Right ventricle myocardium superior (tissue), 1 donor: ENCODE measurements at regions of chr15 and their contacts with region 1.

Region 1: GRCh38 chr15:34847612-34848011 is 52.3 kb upstream of the ACTC1 start:
- DNase-seq: no peak
- ATAC-seq: no peak

Region 2: GRCh38 chr15:34821831-34822230 is 25.8 kb before region 1 on chr15:
- intact Hi-C with region 1: loop called (anchors 2 kb)
- DNase-seq: no peak
- ATAC-seq: peak; percentile 65